Esophagus squamous epithelium (tissue), 5 donors: ENCODE measurements at regions of chr17 and their contacts with region 1.

Region 1: GRCh38 chr17:35764123-35764991 is 3.7 kb downstream of the C17orf50 start:
- DNase-seq: no peak
- H3K4me3 ChIP-seq: peak overlapping the region; percentile 39 to 72 (median 48)
- H3K27ac ChIP-seq: peak overlapping the region in 2 of 4 donors; percentile 32 to 60
- H3K4me1 ChIP-seq: peaks cover 5 to 20% (median 14%) of the 10 kb centered on the region in 3 donors
- H3K27me3 ChIP-seq: no peaks in the 10 kb centered on the region
- CTCF ChIP-seq: peak; percentile 90 to 98 (median 96)
- POLR2A ChIP-seq: no peak

Region 2: DNA sequence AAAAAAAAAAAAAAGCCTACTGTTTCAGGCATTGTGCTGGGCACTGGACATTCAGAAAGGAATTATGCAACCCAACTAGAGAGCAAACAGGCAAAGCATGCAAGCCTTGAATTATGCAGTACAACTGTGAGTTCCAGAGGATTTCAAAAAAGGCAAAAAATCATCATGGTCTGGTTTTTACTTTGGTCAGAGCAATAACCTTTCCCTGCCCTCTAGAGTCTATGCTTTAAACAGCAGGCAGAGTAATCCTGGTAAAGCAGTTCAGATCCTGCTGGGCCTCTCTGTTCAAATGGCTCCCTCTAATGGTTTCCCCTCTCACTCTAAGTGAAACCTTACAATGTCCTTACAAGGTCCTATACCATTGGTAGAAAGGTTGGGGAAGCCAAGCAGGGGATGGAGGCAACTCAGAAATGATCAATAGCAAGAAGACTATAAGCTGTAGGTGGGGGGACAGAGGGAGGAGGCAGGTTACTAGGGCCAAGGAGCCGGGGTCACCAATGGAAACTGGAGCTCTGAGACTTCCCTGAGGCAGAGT is 40.4 kb after region 1 on chr17:
- intact Hi-C with region 1: loop called (anchors 2 kb)
- DNase-seq: no peak
- H3K4me3 ChIP-seq: no peak overlapping the region
- H3K27ac ChIP-seq: peak overlapping the region; percentile 27 to 58 (median 52)
- H3K4me1 ChIP-seq: peaks cover 18 to 45% (median 36%) of the 10 kb centered on the region in 3 donors
- H3K27me3 ChIP-seq: no peaks in the 10 kb centered on the region
- CTCF ChIP-seq: peak; percentile 61 to 95 (median 90)
- POLR2A ChIP-seq: no peak